Lower leg skin (tissue), 4 donors: ENCODE measurements at regions of chr5 and their contacts with region 1.

Region 1: DNA sequence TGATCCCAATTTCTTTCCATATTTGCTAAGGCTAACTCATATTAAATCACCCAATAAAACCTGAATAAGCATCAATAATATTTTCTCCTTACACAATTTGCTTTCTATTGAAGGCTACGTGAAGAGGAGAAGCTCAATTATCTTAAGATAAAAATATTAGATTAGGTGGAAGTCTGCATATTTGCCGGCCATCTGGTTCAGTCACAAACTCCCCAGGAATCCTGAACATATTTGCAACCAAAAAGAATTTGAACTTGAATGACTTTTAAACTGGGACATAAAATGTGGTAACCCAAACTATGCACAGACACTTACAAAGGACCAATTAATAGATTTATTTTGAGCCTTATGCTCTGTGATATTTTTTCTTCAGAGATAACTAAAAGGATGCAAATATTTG is 92.3 kb downstream of the HAPLN1 start:
- DNase-seq: no peak
- H3K4me3 ChIP-seq: no peak overlapping the region
- CTCF ChIP-seq: no peak
- POLR2A ChIP-seq: no peak

Region 2: GRCh38 chr5:83688281-83688680 is 59.9 kb after region 1 on chr5:
- intact Hi-C with region 1: loop called (anchors 2 kb)
- DNase-seq: no peak
- H3K4me3 ChIP-seq: no peak overlapping the region
- CTCF ChIP-seq: no peak
- POLR2A ChIP-seq: no peak